MCF 10A (cell line): ENCODE measurements at regions of chr6 and their contacts with region 1.

Region 1: DNA sequence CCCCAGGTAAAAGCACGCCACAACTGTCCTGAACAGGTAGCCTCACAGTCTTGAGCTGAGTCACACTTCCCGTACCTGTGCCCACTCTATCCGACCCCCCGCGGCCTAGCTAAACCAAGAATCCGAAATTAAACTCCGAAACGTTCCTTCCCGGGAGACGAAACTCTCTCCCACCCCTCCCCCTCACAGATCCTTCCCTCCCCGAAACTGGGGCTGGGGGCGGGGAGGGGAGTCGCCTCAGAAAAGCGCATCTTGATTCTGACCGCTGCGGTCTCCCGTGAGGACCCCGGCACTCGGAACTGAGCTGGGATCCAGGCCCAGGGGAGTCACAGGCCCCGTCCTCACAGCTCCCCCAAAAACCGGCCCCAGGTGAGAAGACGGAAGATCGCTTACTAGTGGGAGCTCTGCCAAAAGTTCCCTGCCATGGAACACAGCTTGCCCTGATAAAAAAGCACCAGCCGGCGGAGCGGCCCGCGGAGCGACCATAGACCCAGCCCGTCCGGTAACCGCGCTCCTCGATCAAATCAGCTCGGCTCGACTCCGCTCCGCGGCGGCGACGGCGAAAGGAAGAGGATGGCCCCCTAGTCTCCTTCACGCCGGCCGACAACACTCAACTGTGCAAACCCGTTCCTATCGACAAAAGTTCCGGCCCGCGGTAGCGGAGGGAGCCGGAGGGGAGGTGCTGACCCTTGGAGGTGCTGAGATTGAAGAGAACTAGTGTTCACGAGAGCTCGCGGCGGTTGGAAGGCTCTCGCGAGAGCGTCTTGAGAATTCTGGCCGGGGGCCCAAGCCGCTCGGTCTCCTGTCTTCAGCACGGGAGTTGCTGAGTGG is at the start of gene CCNC:
- DNase-seq: peak; percentile 97
- H3K4me3 Mint-ChIP-seq: peak within 1 kb of the TSS; percentile 100
- H3K27ac Mint-ChIP-seq: peak within 1 kb of the TSS; percentile 100
- H3K4me1 Mint-ChIP-seq: peaks cover 23% of the 10 kb centered on the region
- H3K27me3 Mint-ChIP-seq: no peaks in the 10 kb centered on the region
- CTCF ChIP-seq: no peak
- total RNA-seq, gene CCNC: 54.0 and 76.5 TPM in 2 replicates

Region 2: DNA sequence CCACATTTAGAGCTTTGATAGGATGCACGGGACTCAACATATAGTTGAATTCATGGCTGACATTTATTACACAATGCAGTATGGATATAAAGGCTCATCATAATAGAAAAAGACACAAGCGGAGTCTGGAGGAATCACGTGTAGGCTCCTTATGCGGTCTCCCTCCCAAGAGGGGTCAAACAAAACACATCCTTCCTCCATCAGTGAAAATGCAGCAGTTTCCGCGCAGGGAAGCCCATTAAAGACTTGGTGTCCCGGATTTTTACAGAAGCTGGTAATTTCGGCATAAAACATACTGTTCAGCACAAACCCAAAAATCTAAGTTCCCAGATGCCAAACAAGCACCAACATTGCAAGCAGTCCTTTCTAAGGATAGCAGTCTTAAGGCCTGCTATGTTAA is 54.2 kb before region 1 on chr6:
- CTCF ChIA-PET with region 1: interaction called, 3 read pairs
- POLR2A ChIA-PET with region 1: interaction called, 38 read pairs
- intact Hi-C with region 1: no loop called
- DNase-seq: peak; percentile 11
- H3K4me3 Mint-ChIP-seq: peak overlapping the region; percentile 93
- H3K27ac Mint-ChIP-seq: peak overlapping the region; percentile 82
- H3K4me1 Mint-ChIP-seq: peaks cover 28% of the 10 kb centered on the region
- H3K27me3 Mint-ChIP-seq: no peaks in the 10 kb centered on the region
- CTCF ChIP-seq: no peak

Region 3: DNA sequence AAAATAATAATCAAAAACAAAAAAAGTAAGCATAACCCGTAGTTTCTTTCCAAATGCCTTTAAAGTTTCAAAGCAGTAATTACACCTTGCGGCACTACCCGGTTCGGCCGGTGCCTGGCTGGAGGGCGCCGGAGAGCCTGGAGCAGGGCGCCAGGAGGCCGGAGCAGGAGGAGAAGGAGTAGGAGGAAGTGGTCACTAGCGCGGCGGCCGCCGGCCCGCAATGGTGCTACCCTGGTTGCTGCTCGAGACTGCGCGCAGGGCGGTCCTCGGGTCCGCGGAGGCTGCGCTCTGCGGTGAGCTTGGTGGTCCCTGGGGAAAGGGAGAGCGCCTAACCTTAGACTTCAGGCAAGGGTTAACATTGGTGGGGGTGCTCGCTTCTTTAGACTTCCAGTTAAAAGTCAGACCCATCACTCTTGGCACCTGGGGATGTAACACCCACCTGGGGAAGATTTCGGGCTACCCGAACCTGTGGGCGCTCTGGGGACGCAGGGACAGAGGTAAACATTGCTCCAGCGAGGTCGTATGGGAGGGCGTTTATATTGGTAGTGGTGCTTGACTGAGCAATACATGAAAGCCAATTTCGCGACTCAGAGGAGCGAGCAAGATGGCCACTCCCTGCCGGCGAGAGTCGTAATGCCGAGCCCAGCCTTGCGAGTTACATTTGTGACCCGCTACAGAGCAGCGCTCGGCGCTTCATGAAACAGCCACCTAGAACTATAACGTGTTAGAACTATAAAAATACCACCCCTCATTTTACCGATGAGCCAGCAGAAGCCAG is 47.3 kb before region 1 on chr6:
- CTCF ChIA-PET with region 1: interaction called, 3 read pairs
- POLR2A ChIA-PET with region 1: interaction called, 38 read pairs
- intact Hi-C with region 1: loop called (anchors 2 kb)
- DNase-seq: peak; percentile 86
- H3K4me3 Mint-ChIP-seq: peak overlapping the region; percentile 96
- H3K27ac Mint-ChIP-seq: peak overlapping the region; percentile 94
- H3K4me1 Mint-ChIP-seq: peaks cover 19% of the 10 kb centered on the region
- H3K27me3 Mint-ChIP-seq: no peaks in the 10 kb centered on the region
- CTCF ChIP-seq: peak; percentile 44

Region 4: GRCh38 chr6:99547524-99547923 is 20.8 kb before region 1 on chr6:
- CTCF ChIA-PET with region 1: no interaction called
- POLR2A ChIA-PET with region 1: interaction called, 11 read pairs
- intact Hi-C with region 1: no loop called
- DNase-seq: peak; percentile 21
- H3K4me3 Mint-ChIP-seq: no peak overlapping the region
- H3K27ac Mint-ChIP-seq: no peak overlapping the region
- H3K4me1 Mint-ChIP-seq: no peaks in the 10 kb centered on the region
- H3K27me3 Mint-ChIP-seq: no peaks in the 10 kb centered on the region
- CTCF ChIP-seq: no peak

Region 5: DNA sequence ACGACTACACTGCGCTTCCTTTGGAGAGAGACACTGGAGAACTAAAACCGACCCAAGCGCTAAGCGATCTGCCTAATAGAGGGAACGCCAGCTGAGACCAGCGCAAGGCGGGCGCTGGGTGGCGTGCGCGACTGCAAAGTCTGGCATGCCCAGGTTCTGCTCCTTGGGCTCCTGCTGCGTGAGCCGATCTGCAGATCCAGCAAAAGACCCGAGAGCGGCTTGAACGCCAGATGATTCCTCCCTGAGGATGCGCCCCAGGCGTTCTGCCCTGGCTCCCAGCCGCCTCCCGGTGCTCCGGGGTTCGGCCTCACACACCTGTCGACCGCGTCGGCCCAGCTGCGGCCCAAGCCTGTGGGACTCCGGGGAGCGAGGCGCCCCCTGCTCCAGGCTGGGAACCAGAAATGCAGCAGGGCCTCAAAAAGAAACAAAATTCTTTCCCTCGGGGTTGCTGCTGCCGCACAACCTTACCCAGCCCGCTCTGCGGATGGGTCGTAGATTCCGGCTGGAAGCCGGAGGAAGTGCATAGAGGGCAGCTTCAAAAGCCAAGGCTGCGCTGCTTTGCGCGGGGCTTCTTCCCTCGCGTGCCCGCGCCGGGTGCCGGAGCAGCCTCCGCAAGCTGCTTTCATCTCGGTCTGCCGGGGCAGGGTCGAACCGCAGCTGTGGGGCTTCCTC is 20.4 kb after region 1 on chr6:
- CTCF ChIA-PET with region 1: interaction called, 3 read pairs
- POLR2A ChIA-PET with region 1: interaction called, 16 read pairs
- intact Hi-C with region 1: no loop called
- DNase-seq: peak; percentile 58
- H3K4me3 Mint-ChIP-seq: peak overlapping the region; percentile 73
- H3K27ac Mint-ChIP-seq: no peak overlapping the region
- H3K4me1 Mint-ChIP-seq: peaks cover 5% of the 10 kb centered on the region
- H3K27me3 Mint-ChIP-seq: peaks cover 68% of the 10 kb centered on the region
- CTCF ChIP-seq: peak; percentile 31